Right ventricle myocardium inferior (tissue), 1 donor: ENCODE measurements at regions of chr12 and their contacts with region 1.

Region 1: DNA sequence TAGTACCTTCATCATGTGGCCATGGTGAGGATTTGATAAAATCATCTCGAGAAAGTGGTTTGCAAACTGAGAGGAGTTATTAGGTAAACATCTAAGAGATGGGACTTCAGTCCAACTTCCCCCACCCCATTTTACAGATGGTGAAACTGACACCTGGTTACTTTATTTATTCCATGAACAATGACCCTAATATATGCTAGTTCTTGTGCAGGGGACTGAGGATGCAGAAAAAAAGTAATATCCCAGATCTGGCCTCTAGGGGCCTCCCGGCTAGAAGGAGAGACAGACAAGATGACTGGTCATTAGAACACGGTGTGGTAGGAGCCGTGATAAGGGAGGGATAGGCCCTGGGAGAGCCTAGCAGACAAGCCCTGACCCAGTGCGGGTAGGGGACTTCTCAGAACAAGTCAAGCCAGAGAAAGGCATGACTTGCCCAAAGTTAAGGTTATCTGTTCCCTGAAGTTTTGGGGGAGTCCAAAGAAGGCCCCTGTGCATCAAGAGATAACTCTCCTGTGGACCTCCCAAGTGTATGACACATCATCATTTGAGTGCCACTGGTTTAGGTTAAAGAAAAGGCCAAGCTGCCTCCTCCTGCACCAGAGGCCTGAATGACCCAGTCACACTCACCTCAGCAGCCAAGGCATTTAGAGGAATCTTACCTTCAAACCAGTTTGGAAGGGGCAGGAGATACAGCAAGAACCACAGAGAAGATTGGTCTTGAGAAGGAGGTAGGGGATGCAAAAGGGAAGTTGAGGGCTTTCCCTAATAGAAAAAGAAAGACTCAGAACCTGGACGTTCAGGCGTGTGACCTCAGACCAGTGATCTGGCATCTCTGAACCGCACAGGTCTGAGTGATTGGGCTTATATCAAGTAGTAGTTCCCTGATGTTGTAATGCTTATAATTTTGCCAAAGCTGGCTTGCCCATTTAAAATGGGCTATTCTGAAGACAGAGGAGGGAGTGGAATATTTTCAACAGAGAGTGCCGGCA is 1.6 kb downstream of the CMKLR1 start:
- DNase-seq: no peak
- ATAC-seq: peak; percentile 40

Region 2: DNA sequence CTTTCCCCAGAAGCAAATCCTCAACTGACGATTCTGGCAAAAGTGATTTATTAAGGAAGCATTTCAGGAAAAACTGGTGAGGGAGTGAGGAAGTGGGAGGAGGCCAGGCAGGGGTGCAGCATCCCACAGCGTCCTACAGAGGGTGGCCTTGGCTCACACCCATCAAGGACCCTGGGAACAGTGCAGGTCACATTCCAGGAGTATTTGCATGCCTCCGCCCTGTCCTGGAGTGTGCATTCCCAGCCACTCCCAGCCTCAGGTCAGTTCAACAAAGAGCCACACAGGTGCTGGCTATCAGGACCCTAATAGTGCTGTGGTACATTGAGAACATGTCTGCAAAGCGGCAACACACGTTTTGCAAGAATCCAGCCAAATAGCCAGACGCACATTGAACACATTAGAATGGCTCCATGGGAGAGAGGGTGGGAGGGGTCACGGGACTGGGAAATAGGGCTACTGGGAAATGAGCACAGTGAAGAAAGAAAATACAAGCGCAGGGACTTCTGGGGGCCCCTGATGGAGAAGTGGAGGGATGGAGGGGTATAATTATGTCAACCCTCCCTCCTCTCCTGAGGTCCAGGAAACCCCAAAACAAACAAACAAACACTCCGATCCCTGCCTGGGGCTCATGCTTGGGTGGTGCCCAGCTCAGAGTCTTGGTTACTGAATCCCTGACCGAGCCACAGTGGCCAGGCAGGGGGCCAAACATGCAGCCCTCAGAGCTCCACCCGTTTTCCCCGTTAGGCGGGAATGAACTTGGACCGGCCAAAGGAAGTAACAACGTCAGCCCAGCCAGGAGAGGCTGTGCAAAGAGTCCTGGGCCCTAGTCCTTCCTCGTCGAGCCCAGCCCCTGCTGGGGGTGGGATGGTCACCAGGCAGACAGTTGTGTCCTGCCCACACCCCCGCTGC is 34.9 kb before region 1 on chr12:
- intact Hi-C with region 1: loop called (anchors 5 kb)
- DNase-seq: peak; percentile 91
- ATAC-seq: peak; percentile 67